ENCODE measurements at regions of chr9 and their contacts with region 1.

Region 1: DNA sequence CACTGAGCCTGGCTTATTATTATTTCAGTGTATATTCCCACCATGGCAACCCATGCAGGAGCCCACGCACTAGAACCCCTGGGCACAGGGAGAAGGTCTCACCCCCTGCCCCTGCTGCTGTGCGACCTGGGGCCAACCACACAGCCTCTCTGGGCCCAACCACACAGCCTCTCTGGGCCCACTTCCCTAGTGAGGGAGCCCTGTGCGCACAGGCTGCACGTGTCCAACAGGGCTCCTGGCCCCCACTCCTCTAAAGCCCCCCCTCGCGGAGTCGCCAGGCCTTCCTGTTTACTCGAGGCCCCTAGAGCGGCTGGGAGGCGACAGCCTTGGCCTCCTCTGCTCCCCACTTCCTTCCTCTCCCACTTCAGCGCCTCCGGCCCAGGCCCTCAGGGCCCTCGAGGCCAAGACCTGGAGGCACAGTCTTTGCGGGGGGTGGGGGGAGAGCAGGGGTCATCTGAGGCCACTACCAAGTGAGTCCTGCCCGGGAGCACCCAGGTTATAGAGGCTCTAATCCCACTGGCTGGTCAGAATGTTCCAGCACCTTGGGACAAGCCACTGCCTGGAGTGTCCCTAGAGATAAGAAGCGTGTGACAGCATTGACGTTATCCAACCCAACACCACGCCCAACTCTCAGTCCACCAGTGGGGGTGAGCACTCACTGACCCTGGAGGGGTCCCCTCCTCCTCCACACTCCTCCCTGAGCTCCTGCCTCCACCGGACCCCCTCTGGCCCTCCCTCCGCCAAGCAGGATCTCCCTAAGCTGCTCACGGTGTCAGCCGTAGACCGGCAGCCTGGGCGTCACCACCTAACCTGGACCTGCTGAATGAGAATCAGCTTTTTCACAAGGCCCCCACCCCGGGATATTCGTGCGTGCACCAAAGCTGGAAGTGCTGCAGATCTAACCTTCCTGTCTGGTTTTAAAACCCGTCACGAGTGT is 7.9 kb upstream of the ENG start:
- DNase-seq: peak; percentile 87
- ATAC-seq: peak; percentile 77
- H3K4me3 ChIP-seq: no peak overlapping the region
- H3K4me3 Mint-ChIP-seq: peak overlapping the region; percentile 78
- H3K27ac ChIP-seq: peak overlapping the region; percentile 90 to 92
- H3K27ac Mint-ChIP-seq: peak overlapping the region; percentile 99
- H3K4me1 ChIP-seq: peaks cover 59 to 78% of the 10 kb centered on the region in 2 donors
- H3K4me1 Mint-ChIP-seq: peaks cover 64% of the 10 kb centered on the region
- H3K27me3 ChIP-seq: no peaks in the 10 kb centered on the region
- H3K27me3 Mint-ChIP-seq: no peaks in the 10 kb centered on the region
- CTCF ChIP-seq: no peak

Region 2: GRCh38 chr9:127796225-127796813 is 66.0 kb before region 1 on chr9:
- CTCF ChIA-PET with region 1: no interaction called
- POLR2A ChIA-PET with region 1: interaction called, 18 read pairs
- intact Hi-C with region 1: no loop called
- DNase-seq: no peak
- ATAC-seq: peak; percentile 29
- H3K4me3 ChIP-seq: no peak overlapping the region
- H3K4me3 Mint-ChIP-seq: peak overlapping the region; percentile 67
- H3K27ac ChIP-seq: peak overlapping the region; percentile 32 to 33
- H3K27ac Mint-ChIP-seq: peak overlapping the region; percentile 89
- H3K4me1 ChIP-seq: peaks cover 20 to 29% of the 10 kb centered on the region in 2 donors
- H3K4me1 Mint-ChIP-seq: peaks cover 29% of the 10 kb centered on the region
- H3K27me3 ChIP-seq: no peaks in the 10 kb centered on the region
- H3K27me3 Mint-ChIP-seq: no peaks in the 10 kb centered on the region
- CTCF ChIP-seq: no peak

Region 3: GRCh38 chr9:127802576-127803443 is 59.5 kb before region 1 on chr9 and contains the start of gene FPGS:
- CTCF ChIA-PET with region 1: interaction called, 4 read pairs
- POLR2A ChIA-PET with region 1: interaction called, 4 read pairs
- intact Hi-C with region 1: loop called (anchors 2 kb)
- DNase-seq: peak; percentile 93
- ATAC-seq: peak; percentile 84
- H3K4me3 ChIP-seq: peak within 1 kb of the TSS; percentile 65 to 96 (median 88)
- H3K4me3 Mint-ChIP-seq: peak within 1 kb of the TSS; percentile 91
- H3K27ac ChIP-seq: peak within 1 kb of the TSS; percentile 68 to 90
- H3K27ac Mint-ChIP-seq: peak within 1 kb of the TSS; percentile 92
- H3K4me1 ChIP-seq: peaks cover 20 to 31% of the 10 kb centered on the region in 2 donors
- H3K4me1 Mint-ChIP-seq: peaks cover 33% of the 10 kb centered on the region
- H3K27me3 ChIP-seq: no peaks in the 10 kb centered on the region
- H3K27me3 Mint-ChIP-seq: no peaks in the 10 kb centered on the region
- CTCF ChIP-seq: no peak
- total RNA-seq, gene FPGS: 136 and 137 TPM in 2 replicates

Region 4: GRCh38 chr9:127899128-127899946 is 37.0 kb after region 1 on chr9 and contains the start of gene ST6GALNAC6:
- CTCF ChIA-PET with region 1: no interaction called
- POLR2A ChIA-PET with region 1: interaction called, 3 read pairs
- intact Hi-C with region 1: loop called (anchors 2 kb)
- DNase-seq: peak; percentile 82
- ATAC-seq: peak; percentile 81
- H3K4me3 ChIP-seq: peak within 1 kb of the TSS; percentile 61 to 83 (median 82)
- H3K4me3 Mint-ChIP-seq: peak within 1 kb of the TSS; percentile 90
- H3K27ac ChIP-seq: peak within 1 kb of the TSS; percentile 56 to 66
- H3K27ac Mint-ChIP-seq: peak within 1 kb of the TSS; percentile 88
- H3K4me1 ChIP-seq: peaks cover 41 to 69% of the 10 kb centered on the region in 2 donors
- H3K4me1 Mint-ChIP-seq: peaks cover 51% of the 10 kb centered on the region
- H3K27me3 ChIP-seq: no peaks in the 10 kb centered on the region
- H3K27me3 Mint-ChIP-seq: no peaks in the 10 kb centered on the region
- CTCF ChIP-seq: no peak
- total RNA-seq, gene ST6GALNAC6: 126 and 136 TPM in 2 replicates

Region 5: DNA sequence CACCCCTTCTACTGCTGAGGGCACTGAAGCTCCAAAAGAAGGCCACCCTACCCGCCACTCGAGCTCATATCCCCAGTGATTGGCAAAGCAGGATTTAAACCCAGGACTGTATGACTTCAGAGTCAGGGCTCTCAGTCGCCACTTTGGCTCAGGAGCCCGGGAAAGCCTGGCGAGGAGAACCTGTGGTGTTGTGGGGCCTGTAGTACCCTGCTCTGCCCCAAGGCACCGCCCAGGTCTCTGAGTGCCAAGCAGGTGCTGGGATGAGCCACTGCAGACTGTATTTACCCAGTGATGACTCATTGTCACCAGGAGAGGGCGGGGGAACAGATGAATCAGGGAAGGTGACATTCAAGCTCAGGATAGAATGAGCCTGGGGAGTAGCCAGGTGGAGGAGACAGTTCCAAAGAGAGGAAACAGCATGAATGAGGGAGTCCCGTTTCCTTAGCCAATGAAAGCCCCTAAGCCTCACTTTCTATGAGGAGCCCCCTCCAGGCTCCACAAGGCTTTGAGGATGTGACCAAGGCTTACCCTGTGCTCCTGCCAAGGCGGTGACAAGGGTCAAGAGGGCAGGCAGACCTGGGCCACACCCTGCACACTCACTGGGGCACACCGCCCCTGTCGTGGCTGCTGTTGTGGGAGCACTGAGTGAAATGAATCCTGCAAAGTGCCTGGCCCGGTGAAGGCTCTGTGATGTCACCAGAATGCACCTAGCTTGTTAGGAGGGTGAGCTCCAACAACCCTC is 93.1 kb after region 1 on chr9:
- CTCF ChIA-PET with region 1: no interaction called
- POLR2A ChIA-PET with region 1: no interaction called
- intact Hi-C with region 1: no loop called
- DNase-seq: peak; percentile 77
- ATAC-seq: peak; percentile 97
- H3K4me3 ChIP-seq: no peak overlapping the region
- H3K4me3 Mint-ChIP-seq: peak overlapping the region; percentile 16
- H3K27ac ChIP-seq: peak overlapping the region in 1 of 2 donors; percentile 46
- H3K27ac Mint-ChIP-seq: peak overlapping the region; percentile 80
- H3K4me1 ChIP-seq: peaks cover 8 to 30% of the 10 kb centered on the region in 2 donors
- H3K4me1 Mint-ChIP-seq: peaks cover 53% of the 10 kb centered on the region
- H3K27me3 ChIP-seq: no peaks in the 10 kb centered on the region
- H3K27me3 Mint-ChIP-seq: no peaks in the 10 kb centered on the region
- CTCF ChIP-seq: peak; percentile 63